ENCODE measurements at regions of chr3 and their contacts with region 1.

Region 1: GRCh38 chr3:69084326-69085167 is at the start of gene ARL6IP5:
- DNase-seq: peak; percentile 94
- H3K4me3 ChIP-seq: peak within 1 kb of the TSS; percentile 86
- H3K27ac ChIP-seq: peak within 1 kb of the TSS; percentile 77
- H3K4me1 ChIP-seq: peaks cover 71% of the 10 kb centered on the region
- CTCF ChIP-seq: no peak
- total RNA-seq, gene ARL6IP5: 18.5 and 28.9 TPM in 2 replicates

Region 2: DNA sequence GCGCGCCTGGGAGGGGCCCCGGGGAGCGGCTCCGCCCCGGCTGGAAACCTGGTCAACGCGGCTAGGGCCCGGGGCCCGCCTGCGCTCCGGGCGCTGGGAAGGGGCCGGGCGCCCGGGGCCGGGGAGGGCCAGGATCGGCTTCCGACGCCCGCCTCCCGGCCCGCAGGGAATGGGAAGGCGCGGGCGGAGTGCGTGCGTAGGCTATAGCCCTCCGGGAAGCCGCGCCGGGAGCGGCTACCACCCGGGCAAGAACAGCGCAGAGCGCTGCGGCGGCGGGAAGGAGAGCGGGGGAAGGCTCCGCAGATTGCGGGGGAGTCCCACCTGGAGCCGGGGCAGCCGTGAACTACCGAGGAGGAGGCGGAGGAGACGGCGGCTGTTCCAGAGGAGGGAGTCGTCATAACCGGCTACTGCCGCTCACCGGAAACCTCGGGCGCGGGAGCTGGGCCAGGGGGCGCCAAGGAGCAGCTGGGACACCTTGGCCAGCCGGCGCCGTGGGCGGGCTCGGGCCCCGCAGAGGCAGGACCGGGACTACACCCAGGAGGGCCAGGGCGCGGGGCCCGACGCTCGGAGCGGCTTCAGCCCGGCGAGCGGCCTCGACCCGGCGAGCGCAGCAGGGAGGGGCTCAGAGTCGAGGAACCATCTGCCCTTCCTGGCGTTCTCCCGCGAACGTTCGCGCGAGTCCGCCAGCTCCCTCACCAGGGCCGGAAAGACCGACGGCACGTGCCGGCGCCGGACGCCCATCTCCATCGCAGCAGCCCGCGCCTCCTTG is 71.1 kb before region 1 on chr3 and contains the start of gene EOGT:
- CTCF ChIA-PET with region 1: no interaction called
- POLR2A ChIA-PET with region 1: interaction called, 3 read pairs
- intact Hi-C with region 1: loop called (anchors 2 kb)
- DNase-seq: peak; percentile 77
- H3K4me3 ChIP-seq: peak within 1 kb of the TSS; percentile 73
- H3K27ac ChIP-seq: no peak within 1 kb of the TSS
- H3K4me1 ChIP-seq: peaks cover 13% of the 10 kb centered on the region
- CTCF ChIP-seq: peak; percentile 73
- total RNA-seq, gene EOGT: 3.6 and 5.9 TPM in 2 replicates

Region 3: GRCh38 chr3:69051756-69052471 is 32.6 kb before region 1 on chr3 and contains the start of gene TMF1:
- CTCF ChIA-PET with region 1: no interaction called
- POLR2A ChIA-PET with region 1: interaction called, 49 read pairs
- intact Hi-C with region 1: loop called (anchors 1 kb)
- DNase-seq: peak; percentile 98
- H3K4me3 ChIP-seq: peak within 1 kb of the TSS; percentile 88
- H3K27ac ChIP-seq: peak within 1 kb of the TSS; percentile 56
- H3K4me1 ChIP-seq: peaks cover 16% of the 10 kb centered on the region
- CTCF ChIP-seq: no peak
- total RNA-seq, gene TMF1: 16.6 and 20.8 TPM in 2 replicates

Region 4: GRCh38 chr3:69058180-69058946 is 26.2 kb before region 1 on chr3:
- CTCF ChIA-PET with region 1: no interaction called
- POLR2A ChIA-PET with region 1: interaction called, 49 read pairs
- intact Hi-C with region 1: loop called (anchors 2 kb)
- DNase-seq: peak; percentile 65
- H3K4me3 ChIP-seq: no peak overlapping the region
- H3K27ac ChIP-seq: peak overlapping the region; percentile 52
- H3K4me1 ChIP-seq: peaks cover 13% of the 10 kb centered on the region
- CTCF ChIP-seq: no peak

Region 5: DNA sequence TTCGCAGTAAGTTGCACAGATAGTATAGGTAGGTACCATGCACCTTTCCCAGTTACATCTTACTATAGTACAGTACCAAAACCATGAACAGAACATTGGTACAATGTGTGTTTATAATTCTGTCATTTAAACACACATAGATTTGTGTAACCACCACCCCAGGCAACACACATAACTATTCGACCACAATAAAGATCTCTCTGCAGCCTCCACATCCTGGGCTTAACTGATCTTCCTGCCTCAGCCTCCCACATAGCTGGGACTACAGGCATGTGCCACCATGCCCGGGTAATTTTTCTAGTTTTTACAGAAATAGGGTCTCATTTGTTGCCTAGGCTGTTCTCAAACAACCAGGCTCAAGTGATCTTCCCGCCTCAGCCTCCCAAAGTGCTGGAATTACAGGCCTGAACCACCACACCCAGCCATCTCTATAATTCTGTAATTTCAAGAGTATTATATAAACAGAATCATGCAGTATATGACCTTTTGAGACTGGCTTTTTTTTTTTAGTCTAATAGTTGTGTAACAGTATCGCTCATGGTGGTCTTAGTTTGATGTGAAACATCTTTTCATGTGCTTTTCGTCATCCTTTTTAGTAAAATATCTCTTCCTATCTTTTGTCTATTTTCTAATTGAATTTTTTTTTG is 19.1 kb before region 1 on chr3:
- CTCF ChIA-PET with region 1: no interaction called
- POLR2A ChIA-PET with region 1: interaction called, 12 read pairs
- intact Hi-C with region 1: no loop called
- DNase-seq: no peak
- H3K4me3 ChIP-seq: no peak overlapping the region
- H3K27ac ChIP-seq: no peak overlapping the region
- H3K4me1 ChIP-seq: no peaks in the 10 kb centered on the region
- CTCF ChIP-seq: no peak